Activated CD4-positive, alpha-beta memory T cell treated with anti-CD3 and anti-CD28 coated beads for 36 hours (primary cell): ENCODE measurements at regions of chr1 and their contacts with region 1.

Region 1: DNA sequence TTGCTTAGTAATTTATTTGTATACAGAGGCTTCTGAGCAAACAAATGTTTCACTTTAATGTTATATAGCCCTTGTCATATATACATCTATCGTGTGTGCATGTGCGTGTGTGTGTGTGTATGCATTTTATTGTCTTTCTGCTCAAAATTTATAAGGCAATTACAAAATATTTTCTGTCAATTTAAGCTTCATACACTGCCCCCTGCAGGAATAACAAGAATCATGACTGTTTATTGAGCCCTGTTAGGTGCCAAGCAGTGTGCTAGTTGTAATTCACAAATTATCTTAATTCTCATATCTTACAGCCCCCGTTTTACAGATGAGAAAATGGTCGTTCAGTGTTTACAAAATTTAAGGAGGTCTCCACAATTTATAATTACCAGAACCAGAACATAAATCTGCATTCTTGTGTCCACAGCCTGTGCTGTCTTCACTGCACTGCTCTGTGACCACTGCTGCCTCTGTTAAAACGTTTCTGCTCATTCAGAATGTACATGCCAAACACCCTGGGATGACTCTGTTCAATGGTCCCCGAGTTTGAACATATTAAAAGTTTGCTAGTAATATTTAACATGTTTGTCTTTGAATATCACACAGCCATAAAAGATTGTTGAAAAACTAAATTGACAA is 181.3 kb downstream of the ATP6V1G3 start:
- DNase-seq: no peak
- H3K4me3 Mint-ChIP-seq: no peak overlapping the region
- H3K27ac Mint-ChIP-seq: no peak overlapping the region
- H3K4me1 Mint-ChIP-seq: peaks cover 8% of the 10 kb centered on the region
- H3K27me3 Mint-ChIP-seq: no peaks in the 10 kb centered on the region

Region 2: GRCh38 chr1:198201956-198202784 is 157.0 kb before region 1 on chr1:
- CTCF ChIA-PET with region 1: interaction called, 3 read pairs
- POLR2A ChIA-PET with region 1: interaction called, 6 read pairs
- intact Hi-C with region 1: loop called (anchors 5 kb)
- DNase-seq: peak; percentile 75
- H3K4me3 Mint-ChIP-seq: peak overlapping the region; percentile 40
- H3K27ac Mint-ChIP-seq: peak overlapping the region; percentile 75
- H3K4me1 Mint-ChIP-seq: peaks cover 75% of the 10 kb centered on the region
- H3K27me3 Mint-ChIP-seq: no peaks in the 10 kb centered on the region